PC-3 (cell line): ENCODE measurements at regions of chr5 and their contacts with region 1.

Region 1: DNA sequence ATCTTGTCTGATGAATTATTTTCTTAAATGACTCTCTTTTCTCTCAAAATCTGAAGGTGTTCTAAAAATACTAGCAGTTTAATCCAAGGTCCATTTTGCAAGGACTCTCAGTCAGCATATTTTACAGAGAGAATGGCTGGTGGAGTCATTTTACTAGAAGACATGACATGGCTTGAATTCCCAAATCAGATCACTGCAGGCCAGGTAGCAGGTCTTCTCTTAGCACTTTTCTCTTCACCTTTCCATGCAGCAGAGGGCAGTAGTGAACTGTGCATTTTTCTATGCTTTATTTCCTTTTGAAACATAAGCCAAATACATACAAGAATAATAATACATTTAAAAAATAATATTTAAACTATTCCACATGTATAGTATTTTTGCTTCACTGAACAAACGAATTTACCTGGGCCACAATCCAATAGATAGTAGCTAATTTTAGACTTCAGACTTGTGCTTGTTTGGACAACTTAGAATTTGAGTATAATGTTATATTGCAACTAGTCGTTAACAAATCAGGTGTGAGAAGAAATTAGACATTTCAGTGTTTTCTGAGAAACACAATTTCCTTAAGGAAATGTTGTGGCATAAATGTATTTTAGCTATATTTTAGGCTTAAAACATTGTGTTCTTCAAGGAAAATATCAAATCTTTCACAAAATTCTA is 289.4 kb upstream of the DAB2 start:
- DNase-seq: peak; percentile 96
- ATAC-seq: peak; percentile 45
- H3K4me3 ChIP-seq: peak overlapping the region; percentile 8; the same call in 1 of the 2 replicates
- H3K27ac ChIP-seq: peak overlapping the region; percentile 97
- H3K4me1 ChIP-seq: peaks cover 44% of the 10 kb centered on the region
- H3K27me3 ChIP-seq: no peaks in the 10 kb centered on the region
- CTCF ChIP-seq: peak; percentile 80

Region 2: DNA sequence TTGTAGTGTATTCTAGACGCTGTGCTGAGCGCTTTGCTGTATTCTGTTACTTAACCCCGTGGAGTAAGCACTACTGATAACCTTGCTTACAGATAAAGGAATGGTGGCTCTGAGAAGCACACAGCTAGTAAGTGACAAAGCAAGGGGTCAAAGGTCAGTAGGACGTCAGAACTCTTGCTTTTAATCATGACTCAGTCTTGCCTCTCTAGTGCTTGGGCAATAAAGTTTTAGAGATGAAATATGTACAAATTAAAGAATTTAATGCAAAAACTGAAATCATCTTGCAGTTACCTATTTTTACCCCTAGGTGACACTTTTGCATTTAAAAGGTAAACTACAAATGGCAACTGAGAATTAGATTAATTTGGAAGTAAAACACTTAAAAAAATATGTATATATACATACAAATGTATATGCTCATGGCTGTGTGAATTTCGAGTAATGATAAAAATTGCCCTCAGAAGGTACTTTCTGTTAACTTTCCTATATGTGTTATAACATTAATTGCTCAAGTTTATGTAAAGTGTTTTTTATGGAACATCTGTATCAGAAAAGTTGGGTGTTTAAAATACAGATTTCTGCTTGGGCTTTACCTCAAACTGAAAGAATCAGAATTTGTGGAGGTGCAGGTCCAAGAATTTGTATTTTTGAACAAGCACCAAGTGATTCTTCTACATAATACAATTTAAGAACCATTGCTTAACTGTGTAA is 114.3 kb before region 1 on chr5:
- CTCF ChIA-PET with region 1: interaction called, 7 read pairs
- POLR2A ChIA-PET with region 1: no interaction called
- intact Hi-C with region 1: loop called (anchors 1 kb)
- DNase-seq: peak; percentile 84
- ATAC-seq: peak; percentile 81
- H3K4me3 ChIP-seq: no peak overlapping the region
- H3K27ac ChIP-seq: peak overlapping the region; percentile 36
- H3K4me1 ChIP-seq: peaks cover 16% of the 10 kb centered on the region
- H3K27me3 ChIP-seq: no peaks in the 10 kb centered on the region
- CTCF ChIP-seq: peak; percentile 90

Region 3: DNA sequence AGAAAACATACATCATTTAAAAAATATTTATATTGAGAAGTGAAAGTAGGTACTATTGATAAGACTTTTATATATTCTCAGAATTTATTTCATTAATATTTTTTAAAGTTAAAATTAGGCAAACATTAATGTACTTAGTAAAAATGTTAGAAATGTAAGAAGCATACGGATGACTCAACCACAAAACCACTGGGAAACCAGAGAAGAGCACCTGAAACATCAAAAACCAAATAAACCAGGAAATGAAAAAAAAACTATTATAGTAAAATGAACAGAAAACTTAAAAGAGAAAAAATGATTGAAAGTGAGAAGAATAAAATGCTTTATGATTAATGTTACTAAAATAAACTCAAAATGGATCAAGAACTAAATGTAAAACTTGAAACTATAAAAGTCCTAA is 56.2 kb before region 1 on chr5:
- CTCF ChIA-PET with region 1: no interaction called
- POLR2A ChIA-PET with region 1: no interaction called
- intact Hi-C with region 1: loop called (anchors 2 kb)
- DNase-seq: peak; percentile 51
- ATAC-seq: peak; percentile 53; the same call in 1 of the 2 replicates
- H3K4me3 ChIP-seq: no peak overlapping the region
- H3K27ac ChIP-seq: peak overlapping the region; percentile 15; the same call in 1 of the 2 replicates
- H3K4me1 ChIP-seq: peaks cover 40% of the 10 kb centered on the region
- H3K27me3 ChIP-seq: no peaks in the 10 kb centered on the region
- CTCF ChIP-seq: no peak

Region 4: DNA sequence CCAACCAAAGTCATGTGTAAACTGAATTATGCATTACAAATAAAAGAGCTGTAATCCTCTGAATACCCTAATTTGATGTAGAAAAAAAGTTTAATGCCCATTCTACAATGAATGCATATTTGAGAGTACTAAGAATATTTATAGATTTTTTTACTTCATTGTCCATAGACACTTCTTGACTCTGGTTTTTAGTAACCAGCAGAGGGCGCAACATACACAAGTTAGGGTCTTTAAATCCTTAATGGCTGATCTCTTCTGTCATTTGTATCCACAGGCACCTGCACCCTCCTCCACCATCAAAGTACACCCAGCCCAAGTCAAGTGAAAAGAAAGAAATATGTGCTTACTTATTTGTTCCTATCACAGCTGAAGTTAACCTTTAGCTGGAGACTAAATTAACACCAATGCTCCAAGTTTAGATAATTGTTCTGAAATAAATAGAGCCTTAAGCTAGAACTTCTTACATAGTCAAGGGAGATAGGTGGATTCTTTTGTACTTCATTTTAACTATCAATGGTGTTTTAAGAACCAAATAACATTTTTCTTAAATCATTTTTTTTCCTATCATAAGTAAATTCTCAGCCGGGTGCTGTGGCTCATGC is 234.8 kb after region 1 on chr5:
- CTCF ChIA-PET with region 1: interaction called, 3 read pairs
- POLR2A ChIA-PET with region 1: no interaction called
- intact Hi-C with region 1: loop called (anchors 1 kb)
- DNase-seq: peak; percentile 89
- ATAC-seq: peak; percentile 81
- H3K4me3 ChIP-seq: no peak overlapping the region
- H3K27ac ChIP-seq: no peak overlapping the region
- H3K4me1 ChIP-seq: no peaks in the 10 kb centered on the region
- H3K27me3 ChIP-seq: no peaks in the 10 kb centered on the region
- CTCF ChIP-seq: peak; percentile 93

Region 5: DNA sequence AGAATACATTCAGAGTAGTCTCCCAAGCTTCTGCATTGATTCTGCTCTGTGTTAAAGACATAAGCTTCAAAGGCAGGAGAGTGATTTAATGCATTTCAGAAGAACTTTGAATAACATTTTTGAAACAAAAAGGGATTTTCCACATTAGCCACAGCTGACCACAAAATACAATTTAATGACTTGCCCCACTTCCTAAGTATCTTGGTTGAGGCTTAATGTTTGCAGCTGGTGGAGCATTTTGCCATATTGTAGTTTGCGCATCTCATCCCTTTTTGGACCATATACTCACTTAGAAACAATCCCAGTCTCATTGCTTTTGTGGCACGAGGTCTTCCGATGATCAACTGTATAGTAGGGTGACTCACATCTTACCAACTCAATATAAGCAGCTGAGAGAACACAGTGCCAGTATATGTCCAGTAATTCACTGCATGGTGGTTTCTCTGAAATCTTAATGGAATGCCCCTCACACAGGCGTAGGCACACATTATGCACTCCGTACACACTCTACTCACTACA is 509.8 kb after region 1 on chr5:
- CTCF ChIA-PET with region 1: no interaction called
- POLR2A ChIA-PET with region 1: no interaction called
- intact Hi-C with region 1: loop called (anchors 10 kb)
- DNase-seq: peak; percentile 90
- ATAC-seq: peak; percentile 95
- H3K4me3 ChIP-seq: peak overlapping the region; percentile 38; the same call in 1 of the 2 replicates
- H3K27ac ChIP-seq: peak overlapping the region; percentile 92
- H3K4me1 ChIP-seq: peaks cover 32% of the 10 kb centered on the region
- H3K27me3 ChIP-seq: no peaks in the 10 kb centered on the region
- CTCF ChIP-seq: no peak

Region 6: DNA sequence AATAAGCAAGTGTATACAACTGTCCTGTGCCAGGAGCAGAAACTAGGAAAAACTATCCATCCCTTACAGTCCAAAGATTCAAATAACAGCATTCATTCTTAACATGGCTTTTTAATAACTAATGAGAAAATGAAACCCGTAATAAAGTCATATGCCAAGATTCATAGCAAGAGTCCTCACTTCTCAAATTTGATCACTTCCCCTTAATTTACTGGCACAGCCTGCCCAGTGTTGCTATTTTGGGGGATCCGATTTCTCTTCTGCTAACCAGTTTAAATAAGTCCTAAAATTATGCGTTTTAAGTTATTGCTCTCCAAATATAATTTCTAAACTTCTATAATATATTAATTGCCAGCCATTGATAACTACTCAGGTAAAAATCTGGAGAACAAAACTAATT is 788.6 kb after region 1 on chr5:
- CTCF ChIA-PET with region 1: no interaction called
- POLR2A ChIA-PET with region 1: no interaction called
- intact Hi-C with region 1: loop called (anchors 5 kb)
- DNase-seq: no peak
- ATAC-seq: no peak
- H3K4me3 ChIP-seq: no peak overlapping the region
- H3K27ac ChIP-seq: peak overlapping the region; percentile 75
- H3K4me1 ChIP-seq: peaks cover 23% of the 10 kb centered on the region
- H3K27me3 ChIP-seq: no peaks in the 10 kb centered on the region
- CTCF ChIP-seq: no peak

Region 7: GRCh38 chr5:40736103-40736875 is 1022.1 kb after region 1 on chr5:
- CTCF ChIA-PET with region 1: no interaction called
- POLR2A ChIA-PET with region 1: no interaction called
- intact Hi-C with region 1: loop called (anchors 1 kb)
- DNase-seq: peak; percentile 95
- ATAC-seq: peak; percentile 61
- H3K4me3 ChIP-seq: no peak overlapping the region
- H3K27ac ChIP-seq: no peak overlapping the region
- H3K4me1 ChIP-seq: peaks cover 16% of the 10 kb centered on the region
- H3K27me3 ChIP-seq: no peaks in the 10 kb centered on the region
- CTCF ChIP-seq: peak; percentile 94